Activated CD4-positive, alpha-beta T cell treated with anti-CD3 and anti-CD28 coated beads for 36 hours (primary cell): ENCODE measurements at regions of chr4 and their contacts with region 1.

Region 1: DNA sequence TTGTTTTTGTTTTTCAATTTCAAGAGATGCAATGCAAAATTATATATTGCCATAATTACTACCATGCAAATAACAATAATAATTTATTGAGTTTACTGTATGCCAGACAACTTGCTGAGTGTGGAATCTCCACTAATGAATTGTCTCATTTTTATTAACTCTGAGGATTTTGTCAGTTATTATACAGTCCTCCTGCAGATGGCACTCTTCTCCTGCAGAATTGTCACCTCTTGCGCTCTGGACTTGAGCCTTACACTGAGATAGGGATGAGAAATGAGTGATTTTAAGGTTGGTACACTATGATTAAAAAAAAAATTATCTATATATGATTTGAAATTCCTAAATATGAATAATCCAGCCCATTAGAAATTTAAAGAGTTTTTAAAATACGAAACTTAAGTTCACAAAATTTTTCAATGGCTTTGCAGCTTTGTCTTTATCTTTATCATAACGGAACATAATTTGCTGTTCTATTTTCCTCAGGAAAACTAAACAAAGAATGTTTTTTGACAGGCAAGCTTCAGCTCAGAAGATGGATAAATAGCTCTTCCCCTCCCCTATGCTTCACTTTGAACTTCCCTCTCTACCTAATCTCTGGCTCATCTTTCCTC is 12.7 kb upstream of the PAQR3 start:
- DNase-seq: peak; percentile 46
- ATAC-seq: no peak
- H3K4me3 Mint-ChIP-seq: no peak overlapping the region
- H3K27ac Mint-ChIP-seq: no peak overlapping the region
- H3K4me1 Mint-ChIP-seq: no peaks in the 10 kb centered on the region
- H3K27me3 Mint-ChIP-seq: peaks cover 12% of the 10 kb centered on the region

Region 2: GRCh38 chr4:78971326-78971725 is 19.4 kb after region 1 on chr4:
- CTCF ChIA-PET with region 1: interaction called, 15 read pairs
- POLR2A ChIA-PET with region 1: no interaction called
- intact Hi-C with region 1: no loop called
- DNase-seq: no peak
- ATAC-seq: no peak
- H3K4me3 Mint-ChIP-seq: no peak overlapping the region
- H3K27ac Mint-ChIP-seq: no peak overlapping the region
- H3K4me1 Mint-ChIP-seq: no peaks in the 10 kb centered on the region
- H3K27me3 Mint-ChIP-seq: no peaks in the 10 kb centered on the region

Region 3: GRCh38 chr4:79917246-79917645 is 965.3 kb after region 1 on chr4:
- CTCF ChIA-PET with region 1: interaction called, 5 read pairs
- POLR2A ChIA-PET with region 1: no interaction called
- intact Hi-C with region 1: loop called in 1 of 2 experiments (anchors 10 kb)
- DNase-seq: peak; percentile 67
- ATAC-seq: peak; percentile 60
- H3K4me3 Mint-ChIP-seq: no peak overlapping the region
- H3K27ac Mint-ChIP-seq: peak overlapping the region; percentile 58
- H3K4me1 Mint-ChIP-seq: peaks cover 19% of the 10 kb centered on the region
- H3K27me3 Mint-ChIP-seq: no peaks in the 10 kb centered on the region

Region 4: GRCh38 chr4:80215449-80216052 is 1263.6 kb after region 1 on chr4:
- CTCF ChIA-PET with region 1: interaction called, 4 read pairs
- POLR2A ChIA-PET with region 1: no interaction called
- intact Hi-C with region 1: loop called (anchors 1 kb)
- DNase-seq: no peak
- ATAC-seq: no peak
- H3K4me3 Mint-ChIP-seq: no peak overlapping the region
- H3K27ac Mint-ChIP-seq: no peak overlapping the region
- H3K4me1 Mint-ChIP-seq: peaks cover 2% of the 10 kb centered on the region
- H3K27me3 Mint-ChIP-seq: peaks cover 17% of the 10 kb centered on the region

Region 5: DNA sequence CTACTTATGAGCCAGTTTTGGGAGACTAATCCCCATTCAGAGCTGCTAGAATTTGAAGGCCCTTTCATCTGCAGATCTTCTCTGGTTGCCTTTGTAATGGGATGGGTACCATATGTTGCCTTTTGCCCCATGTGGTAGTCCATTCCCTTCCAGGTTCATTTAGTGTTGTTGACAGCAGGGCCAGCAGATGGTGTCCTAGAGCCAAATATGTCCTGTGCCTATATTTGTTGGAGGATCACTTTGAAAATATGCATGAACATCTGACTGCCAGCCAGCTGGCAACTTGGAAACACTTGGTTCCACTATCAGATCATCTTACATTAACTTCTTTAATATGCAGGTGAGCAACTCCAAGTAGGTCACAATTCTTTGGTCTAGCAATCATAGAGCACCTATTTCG is 1414.0 kb after region 1 on chr4:
- CTCF ChIA-PET with region 1: no interaction called
- POLR2A ChIA-PET with region 1: no interaction called
- intact Hi-C with region 1: loop called in 1 of 2 experiments (anchors 5 kb)
- DNase-seq: peak; percentile 68
- ATAC-seq: no peak
- H3K4me3 Mint-ChIP-seq: no peak overlapping the region
- H3K27ac Mint-ChIP-seq: no peak overlapping the region
- H3K4me1 Mint-ChIP-seq: peaks cover 6% of the 10 kb centered on the region
- H3K27me3 Mint-ChIP-seq: no peaks in the 10 kb centered on the region